Endothelial cell of umbilical vein (primary cell): ENCODE measurements at regions of chr22 and their contacts with region 1.

Region 1: GRCh38 chr22:42933481-42934091 is 76.5 kb upstream of the ARFGAP3 start:
- DNase-seq: peak; percentile 95
- H3K4me3 ChIP-seq: peak overlapping the region in 1 of 3 experiments; percentile 33
- H3K27ac ChIP-seq: peak overlapping the region; percentile 98
- H3K4me1 ChIP-seq: peaks cover 40% of the 10 kb centered on the region
- H3K27me3 ChIP-seq: no peaks in the 10 kb centered on the region
- CTCF ChIP-seq: no peak
- POLR2A ChIP-seq: no peak

Region 2: GRCh38 chr22:42972649-42973535 is 39.3 kb after region 1 on chr22:
- CTCF ChIA-PET with region 1: no interaction called
- POLR2A ChIA-PET with region 1: no interaction called
- dilution Hi-C with region 1: no loop called
- intact Hi-C with region 1: loop called (anchors 2 kb)
- DNase-seq: no peak
- H3K4me3 ChIP-seq: no peak overlapping the region
- H3K27ac ChIP-seq: no peak overlapping the region
- H3K4me1 ChIP-seq: no peaks in the 10 kb centered on the region
- H3K27me3 ChIP-seq: no peaks in the 10 kb centered on the region
- CTCF ChIP-seq: no peak
- POLR2A ChIP-seq: no peak